Right cardiac atrium (tissue), 5 donors: ENCODE measurements at regions of chr1 and their contacts with region 1.

Region 1: DNA sequence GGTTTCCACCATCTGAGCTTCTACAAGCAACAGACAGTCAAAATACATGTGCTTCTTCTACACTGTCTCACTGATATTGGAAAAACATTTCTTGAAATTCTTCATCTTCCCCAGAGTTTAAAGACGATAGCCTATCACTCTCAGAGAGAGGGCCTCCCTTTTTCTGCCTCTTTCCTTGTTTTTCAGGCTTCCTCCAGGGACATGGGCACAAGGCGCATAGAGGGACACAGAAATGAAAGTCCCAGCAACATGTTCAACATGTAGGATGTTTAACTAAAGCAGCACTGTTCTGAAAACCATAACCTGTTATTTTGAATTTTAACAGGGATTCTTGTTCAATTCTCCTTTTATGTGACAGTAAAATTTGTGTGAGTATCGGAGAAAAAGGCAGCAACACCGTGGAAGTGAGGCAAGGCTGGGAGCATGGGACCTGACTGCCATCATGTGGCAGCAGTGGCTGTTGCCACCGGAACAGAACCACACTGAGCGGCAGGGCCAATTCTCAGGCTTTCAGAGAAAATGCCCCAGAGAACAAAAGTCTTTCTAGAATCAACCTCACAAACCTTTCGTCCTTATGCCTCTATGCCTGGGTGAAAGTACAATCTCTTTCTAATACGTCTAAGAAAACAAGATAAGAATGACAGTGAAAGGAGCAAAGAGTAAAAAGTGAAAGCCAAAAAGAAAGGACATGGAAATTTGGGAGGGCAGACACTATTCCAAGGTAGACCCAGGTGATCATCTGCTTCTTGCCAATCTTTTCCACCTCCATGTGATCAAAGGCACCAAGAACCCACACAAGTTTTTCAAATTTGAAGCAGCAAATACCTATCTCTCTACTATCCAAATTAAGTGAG is 54.5 kb downstream of the PCNX2 start:
- DNase-seq: peak; percentile 64 to 87 (median 84)
- ATAC-seq: peak; percentile 86 to 93
- H3K4me3 ChIP-seq: peak overlapping the region; percentile 23
- H3K27ac ChIP-seq: no peak overlapping the region
- H3K4me1 ChIP-seq: no peaks in the 10 kb centered on the region
- H3K27me3 ChIP-seq: no peaks in the 10 kb centered on the region

Region 2: GRCh38 chr1:232635778-232636356 is 605.2 kb before region 1 on chr1:
- intact Hi-C with region 1: loop called (anchors 2 to 5 kb)
- DNase-seq: no peak
- ATAC-seq: peak; percentile 64 to 69
- H3K4me3 ChIP-seq: no peak overlapping the region
- H3K27ac ChIP-seq: no peak overlapping the region
- H3K4me1 ChIP-seq: no peaks in the 10 kb centered on the region
- H3K27me3 ChIP-seq: no peaks in the 10 kb centered on the region